ENCODE measurements at regions of chr15 and their contacts with region 1.

Region 1: DNA sequence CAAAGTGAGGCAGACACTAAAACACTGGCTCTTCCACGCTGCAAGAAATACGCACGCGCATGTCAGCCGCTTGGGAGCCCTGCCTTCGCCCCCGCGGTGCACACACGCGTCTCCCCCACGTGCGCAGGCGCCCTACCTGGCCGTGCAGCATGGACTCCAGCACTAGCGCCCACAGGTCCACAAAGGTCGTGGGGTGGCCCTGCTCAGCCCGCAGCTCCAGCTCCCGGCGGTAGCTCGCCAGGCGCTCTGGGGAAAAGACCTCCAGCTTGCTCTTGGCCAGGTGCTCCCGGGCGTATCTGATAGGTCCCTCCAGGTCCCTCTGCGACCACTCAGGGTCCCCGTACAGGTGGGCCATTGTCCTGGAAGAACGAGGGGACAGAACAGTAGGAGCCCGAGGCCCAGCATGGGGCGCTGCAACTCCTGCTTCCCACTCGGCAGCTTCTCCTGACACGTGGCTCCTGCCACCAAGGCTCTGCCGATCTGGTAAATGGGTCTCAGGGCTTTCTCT is 14.9 kb downstream of the PLA2G4D start:
- DNase-seq: peak; percentile 29
- ATAC-seq: no peak

Region 2: GRCh38 chr15:42121682-42122081 is 42.2 kb after region 1 on chr15:
- intact Hi-C with region 1: loop called (anchors 2 kb)
- DNase-seq: no peak
- ATAC-seq: no peak

Measured in Right ventricle myocardium superior (tissue), 1 donor.